Tibial artery (tissue), 4 donors: ENCODE measurements at regions of chr22 and their contacts with region 1.

Region 1: GRCh38 chr22:28741758-28742561 is at the starts of genes CHEK2 and HSCB:
- DNase-seq: peak; percentile 99
- H3K4me3 ChIP-seq: peak within 1 kb of the TSS; percentile 73 to 99
- H3K27ac ChIP-seq: peak within 1 kb of the TSS; percentile 97 to 100
- H3K4me1 ChIP-seq: peaks cover 0 to 13% (median 11%) of the 10 kb centered on the region in 4 donors
- H3K27me3 ChIP-seq: no peaks in the 10 kb centered on the region
- CTCF ChIP-seq: no peak

Region 2: DNA sequence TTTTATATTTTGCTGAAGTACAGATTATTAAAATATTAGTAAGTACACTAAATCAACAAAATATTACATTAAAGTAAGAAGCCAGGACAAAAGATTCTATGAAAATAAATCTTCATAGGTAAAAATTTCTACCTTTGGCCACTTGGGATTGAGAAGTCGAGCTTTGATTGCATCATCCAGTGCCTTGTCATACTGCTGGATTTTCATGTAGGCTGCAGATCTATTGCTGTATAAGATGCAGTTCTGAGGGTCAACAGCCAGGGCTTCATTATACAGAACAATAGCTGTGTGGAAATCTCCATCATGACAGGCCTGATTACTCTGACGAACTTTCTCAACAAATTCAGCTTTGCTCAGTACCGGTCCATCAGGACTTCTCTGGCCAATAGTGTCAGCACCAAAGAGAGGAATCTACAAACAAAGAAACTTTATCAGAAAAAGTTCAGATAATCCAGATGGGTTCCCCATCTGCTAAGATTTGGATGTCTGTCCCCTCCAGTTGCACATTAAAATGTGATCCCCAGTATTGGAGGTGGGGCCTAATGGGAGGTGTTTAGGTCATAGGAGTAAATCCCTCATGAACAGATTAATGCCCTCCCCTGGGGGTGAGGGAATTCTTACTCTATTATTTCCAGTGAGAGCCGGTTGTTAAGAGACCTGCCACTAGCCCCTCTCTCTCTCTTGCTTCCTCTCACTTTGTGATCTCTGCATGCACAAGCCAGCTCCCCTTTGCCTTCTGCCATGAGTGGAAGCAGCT is 112.4 kb before region 1 on chr22:
- intact Hi-C with region 1: no loop called
- DNase-seq: no peak
- H3K4me3 ChIP-seq: no peak overlapping the region
- H3K27ac ChIP-seq: no peak overlapping the region
- H3K4me1 ChIP-seq: no peaks in the 10 kb centered on the region
- H3K27me3 ChIP-seq: no peaks in the 10 kb centered on the region
- CTCF ChIP-seq: no peak

Region 3: DNA sequence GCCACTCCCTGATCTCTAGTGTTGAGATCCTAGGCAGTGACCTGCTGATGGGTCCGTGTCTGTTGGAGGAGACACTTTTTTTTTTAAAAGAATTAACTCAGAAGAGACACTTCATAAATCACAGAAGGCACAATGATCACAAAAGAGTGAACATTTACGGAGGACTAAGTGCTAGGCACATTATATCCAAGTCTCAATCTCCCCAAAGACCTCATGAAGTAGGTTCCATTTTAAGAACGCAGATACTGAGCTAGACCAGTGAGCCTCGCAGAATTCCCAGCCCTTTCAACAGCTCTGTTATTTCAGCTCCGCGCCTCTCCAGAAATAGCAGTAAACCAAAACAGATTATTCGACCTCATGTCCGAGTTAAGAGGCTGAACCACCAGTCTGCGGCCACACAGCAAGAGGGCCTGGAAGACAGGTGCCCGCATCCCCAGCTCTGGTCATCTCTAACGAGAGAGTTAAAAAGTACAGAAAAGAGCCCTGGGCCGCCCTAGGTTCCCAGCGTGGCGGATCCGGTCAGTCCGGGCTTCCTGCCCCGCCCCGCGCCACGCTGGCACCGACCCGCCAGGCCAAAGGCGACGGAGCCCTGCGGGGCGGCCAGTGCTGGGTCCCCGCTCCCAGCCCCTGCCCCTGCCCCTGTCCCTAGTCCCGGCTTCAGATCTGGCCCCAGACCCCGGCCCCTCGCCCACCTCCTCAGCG is 57.8 kb after region 1 on chr22:
- intact Hi-C with region 1: loop called (anchors 10 kb)
- DNase-seq: peak; percentile 63 to 85
- H3K4me3 ChIP-seq: peak overlapping the region; percentile 87 to 90
- H3K27ac ChIP-seq: peak overlapping the region; percentile 98 to 100
- H3K4me1 ChIP-seq: peaks cover 0 to 63% (median 45%) of the 10 kb centered on the region in 4 donors
- H3K27me3 ChIP-seq: no peaks in the 10 kb centered on the region
- CTCF ChIP-seq: no peak